GM12878 (cell line): ENCODE measurements at regions of chr12 and their contacts with region 1.

Region 1: GRCh38 chr12:49707128-49707811 is at the start of gene FMNL3:
- DNase-seq: peak; percentile 82
- ATAC-seq: peak; percentile 82
- H3K4me3 ChIP-seq: peak within 1 kb of the TSS; percentile 96
- H3K27ac ChIP-seq: peak within 1 kb of the TSS; percentile 82
- H3K4me1 ChIP-seq: peaks cover 19% of the 10 kb centered on the region
- H3K27me3 ChIP-seq: peaks cover 0 to 4% of the 10 kb centered on the region in 2 experiments; a peak in 1 of 4 replicates
- CTCF ChIP-seq: peak; percentile 94 to 99 (median 95); a peak in 5 of 6 replicates
- EP300 ChIP-seq: peak in 1 of 2 experiments; percentile 29; a peak in 1 of 4 replicates
- POLR2A ChIP-seq: peak; percentile 77
- RAD21 ChIP-seq: peak; percentile 95
- polyA plus RNA-seq, gene FMNL3: 3.0 to 5.3 TPM

Region 2: DNA sequence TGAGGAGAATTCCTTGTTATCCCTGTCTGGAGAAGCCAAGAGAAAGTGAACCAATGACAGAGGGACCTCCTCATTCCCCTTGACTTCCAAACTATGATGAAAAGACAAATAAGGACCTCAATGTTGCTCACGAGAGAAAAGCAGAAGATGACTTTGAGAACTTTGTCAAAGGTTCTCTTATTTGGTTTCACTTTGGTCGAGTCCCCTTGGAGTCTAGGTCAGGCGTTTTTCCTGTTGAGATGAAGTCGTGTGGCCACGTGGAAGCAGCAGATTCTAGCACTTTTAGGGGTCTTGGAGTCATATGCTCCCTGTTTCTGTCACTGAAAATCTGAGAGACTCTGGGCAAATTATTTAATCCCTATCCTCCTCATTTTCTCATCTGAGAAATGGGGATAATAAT is 1669.2 kb before region 1 on chr12:
- CTCF ChIA-PET with region 1: no interaction called
- POLR2A ChIA-PET with region 1: no interaction called
- RAD21 ChIA-PET with region 1: no interaction called
- SMC1A ChIA-PET with region 1: no interaction called
- in situ Hi-C with region 1: no loop called
- intact Hi-C with region 1: no loop called
- DNase-seq: no peak
- ATAC-seq: no peak
- H3K4me3 ChIP-seq: no peak overlapping the region
- H3K27ac ChIP-seq: no peak overlapping the region
- H3K4me1 ChIP-seq: no peaks in the 10 kb centered on the region; the same call in 1 of the 2 replicates
- H3K27me3 ChIP-seq: no peaks in the 10 kb centered on the region
- CTCF ChIP-seq: no peak
- EP300 ChIP-seq: no peak
- POLR2A ChIP-seq: no peak
- RAD21 ChIP-seq: no peak

Region 3: GRCh38 chr12:49366652-49367380 is 340.5 kb before region 1 on chr12:
- CTCF ChIA-PET with region 1: no interaction called
- POLR2A ChIA-PET with region 1: interaction called, 8 read pairs
- RAD21 ChIA-PET with region 1: interaction called, 15 read pairs
- SMC1A ChIA-PET with region 1: no interaction called
- in situ Hi-C with region 1: no loop called
- intact Hi-C with region 1: loop called (anchors 5 kb)
- DNase-seq: peak; percentile 73
- ATAC-seq: peak; percentile 84
- H3K4me3 ChIP-seq: peak overlapping the region; percentile 89
- H3K27ac ChIP-seq: peak overlapping the region; percentile 97
- H3K4me1 ChIP-seq: peaks cover 16% of the 10 kb centered on the region
- H3K27me3 ChIP-seq: no peaks in the 10 kb centered on the region
- CTCF ChIP-seq: peak in 2 of 3 experiments; percentile 8 to 10; a peak in 1 of 6 replicates
- EP300 ChIP-seq: no peak
- POLR2A ChIP-seq: peak; percentile 87
- RAD21 ChIP-seq: no peak

Region 4: DNA sequence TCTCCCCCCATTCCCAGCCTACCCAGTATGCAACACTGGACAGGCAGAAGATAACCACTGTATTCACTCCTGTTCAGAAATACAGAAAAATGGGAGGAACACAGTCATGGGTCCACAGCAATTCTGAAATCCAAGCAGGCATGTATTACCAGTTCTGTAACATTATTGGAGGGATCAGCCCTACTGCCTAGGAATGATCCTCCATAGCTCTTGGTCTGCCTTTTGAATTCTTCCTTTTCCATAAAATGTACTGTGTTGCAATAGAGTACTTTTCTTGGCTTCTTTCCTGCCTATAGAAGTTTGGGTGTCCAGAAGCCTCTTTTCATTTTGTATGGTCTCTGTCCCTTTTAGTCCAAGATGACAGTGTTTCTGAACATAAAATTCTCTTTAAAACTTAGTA is 293.5 kb before region 1 on chr12:
- CTCF ChIA-PET with region 1: no interaction called
- POLR2A ChIA-PET with region 1: no interaction called
- RAD21 ChIA-PET with region 1: no interaction called
- SMC1A ChIA-PET with region 1: no interaction called
- in situ Hi-C with region 1: no loop called
- intact Hi-C with region 1: no loop called
- DNase-seq: no peak
- ATAC-seq: no peak
- H3K4me3 ChIP-seq: no peak overlapping the region
- H3K27ac ChIP-seq: no peak overlapping the region
- H3K4me1 ChIP-seq: peaks cover 4% of the 10 kb centered on the region
- H3K27me3 ChIP-seq: no peaks in the 10 kb centered on the region
- CTCF ChIP-seq: no peak
- EP300 ChIP-seq: no peak
- POLR2A ChIP-seq: no peak
- RAD21 ChIP-seq: no peak

Region 5: GRCh38 chr12:49623142-49623904 is 83.9 kb before region 1 on chr12 and contains the start of gene PRPF40B:
- CTCF ChIA-PET with region 1: interaction called, 9 read pairs
- POLR2A ChIA-PET with region 1: interaction called, 35 read pairs
- RAD21 ChIA-PET with region 1: interaction called, 9 read pairs
- SMC1A ChIA-PET with region 1: interaction called, 7 read pairs
- in situ Hi-C with region 1: no loop called
- intact Hi-C with region 1: no loop called
- DNase-seq: peak; percentile 36
- ATAC-seq: peak; percentile 87
- H3K4me3 ChIP-seq: peak within 1 kb of the TSS; percentile 85
- H3K27ac ChIP-seq: peak within 1 kb of the TSS; percentile 75
- H3K4me1 ChIP-seq: peaks cover 17% of the 10 kb centered on the region
- H3K27me3 ChIP-seq: no peaks in the 10 kb centered on the region
- CTCF ChIP-seq: peak; percentile 33 to 66 (median 57)
- EP300 ChIP-seq: no peak
- POLR2A ChIP-seq: peak; percentile 90
- RAD21 ChIP-seq: peak; percentile 40; the same call in 1 of the 2 replicates
- polyA plus RNA-seq, gene PRPF40B: 0.31 to 1.2 TPM

Region 6: DNA sequence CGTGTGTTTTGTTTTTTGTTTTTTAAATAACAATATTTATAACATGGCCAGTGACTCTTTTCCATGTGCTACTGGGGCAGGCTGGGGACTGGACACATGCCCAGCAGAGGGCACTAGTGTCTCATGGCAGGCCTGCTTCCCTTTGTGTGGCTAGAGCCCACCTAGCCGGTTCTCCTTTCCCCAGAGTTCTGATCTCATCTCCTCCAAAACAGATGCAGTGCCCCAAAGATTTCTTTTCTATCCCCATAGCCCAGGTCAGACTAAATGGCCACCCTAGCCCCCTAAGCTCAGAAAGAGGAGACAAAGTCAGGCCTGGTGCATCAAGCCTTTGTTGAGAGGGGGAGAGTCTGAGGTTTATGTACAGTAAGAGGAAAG is 62.7 kb before region 1 on chr12:
- CTCF ChIA-PET with region 1: interaction called, 486 read pairs
- POLR2A ChIA-PET with region 1: interaction called, 28 read pairs
- RAD21 ChIA-PET with region 1: interaction called, 107 read pairs
- SMC1A ChIA-PET with region 1: interaction called, 191 read pairs
- in situ Hi-C with region 1: loop called (anchors 5 kb)
- intact Hi-C with region 1: loop called (anchors 1 kb)
- DNase-seq: peak; percentile 27
- ATAC-seq: peak; percentile 96
- H3K4me3 ChIP-seq: no peak overlapping the region
- H3K27ac ChIP-seq: peak overlapping the region; percentile 28; the same call in 1 of the 2 replicates
- H3K4me1 ChIP-seq: no peaks in the 10 kb centered on the region
- H3K27me3 ChIP-seq: no peaks in the 10 kb centered on the region
- CTCF ChIP-seq: peak; percentile 90 to 95 (median 91)
- EP300 ChIP-seq: no peak
- POLR2A ChIP-seq: no peak
- RAD21 ChIP-seq: peak; percentile 96

Region 7: GRCh38 chr12:49662998-49663843 is 44.0 kb before region 1 on chr12:
- CTCF ChIA-PET with region 1: interaction called, 87 read pairs
- POLR2A ChIA-PET with region 1: interaction called, 166 read pairs
- RAD21 ChIA-PET with region 1: interaction called, 154 read pairs
- SMC1A ChIA-PET with region 1: interaction called, 162 read pairs
- in situ Hi-C with region 1: no loop called
- intact Hi-C with region 1: loop called (anchors 2 kb)
- DNase-seq: peak; percentile 75
- ATAC-seq: peak; percentile 91
- H3K4me3 ChIP-seq: peak overlapping the region; percentile 39; the same call in 1 of the 2 replicates
- H3K27ac ChIP-seq: peak overlapping the region; percentile 86
- H3K4me1 ChIP-seq: peaks cover 58% of the 10 kb centered on the region
- H3K27me3 ChIP-seq: no peaks in the 10 kb centered on the region
- CTCF ChIP-seq: no peak
- EP300 ChIP-seq: peak; percentile 11 to 36; a peak in 2 of 4 replicates
- POLR2A ChIP-seq: peak; percentile 88
- RAD21 ChIP-seq: peak; percentile 23; the same call in 1 of the 2 replicates

Region 8: GRCh38 chr12:49678711-49679110 is 28.6 kb before region 1 on chr12:
- CTCF ChIA-PET with region 1: interaction called, 86 read pairs
- POLR2A ChIA-PET with region 1: interaction called, 166 read pairs
- RAD21 ChIA-PET with region 1: interaction called, 167 read pairs
- SMC1A ChIA-PET with region 1: interaction called, 129 read pairs
- in situ Hi-C with region 1: no loop called
- intact Hi-C with region 1: no loop called
- DNase-seq: no peak
- ATAC-seq: no peak
- H3K4me3 ChIP-seq: no peak overlapping the region
- H3K27ac ChIP-seq: no peak overlapping the region
- H3K4me1 ChIP-seq: peaks cover 23% of the 10 kb centered on the region
- H3K27me3 ChIP-seq: no peaks in the 10 kb centered on the region
- CTCF ChIP-seq: no peak
- EP300 ChIP-seq: no peak
- POLR2A ChIP-seq: no peak
- RAD21 ChIP-seq: no peak

Region 9: GRCh38 chr12:49740930-49741881 is 33.9 kb after region 1 on chr12 and contains the start of gene TMBIM6:
- CTCF ChIA-PET with region 1: interaction called, 24 read pairs
- POLR2A ChIA-PET with region 1: interaction called, 34 read pairs
- RAD21 ChIA-PET with region 1: interaction called, 27 read pairs
- SMC1A ChIA-PET with region 1: interaction called, 20 read pairs
- in situ Hi-C with region 1: no loop called
- intact Hi-C with region 1: loop called (anchors 2 kb)
- DNase-seq: peak; percentile 99
- ATAC-seq: peak; percentile 96
- H3K4me3 ChIP-seq: peak within 1 kb of the TSS; percentile 77
- H3K27ac ChIP-seq: peak within 1 kb of the TSS; percentile 96
- H3K4me1 ChIP-seq: 0 out of 2 replicates have a peak, but pooled peaks cover 2% of the 10 kb centered on the region
- H3K27me3 ChIP-seq: no peaks in the 10 kb centered on the region
- CTCF ChIP-seq: peak; percentile 91 to 99 (median 98)
- EP300 ChIP-seq: no peak
- POLR2A ChIP-seq: peak; percentile 98
- RAD21 ChIP-seq: peak; percentile 80
- polyA plus RNA-seq, gene TMBIM6: 853 to 1,192 TPM

Region 10: DNA sequence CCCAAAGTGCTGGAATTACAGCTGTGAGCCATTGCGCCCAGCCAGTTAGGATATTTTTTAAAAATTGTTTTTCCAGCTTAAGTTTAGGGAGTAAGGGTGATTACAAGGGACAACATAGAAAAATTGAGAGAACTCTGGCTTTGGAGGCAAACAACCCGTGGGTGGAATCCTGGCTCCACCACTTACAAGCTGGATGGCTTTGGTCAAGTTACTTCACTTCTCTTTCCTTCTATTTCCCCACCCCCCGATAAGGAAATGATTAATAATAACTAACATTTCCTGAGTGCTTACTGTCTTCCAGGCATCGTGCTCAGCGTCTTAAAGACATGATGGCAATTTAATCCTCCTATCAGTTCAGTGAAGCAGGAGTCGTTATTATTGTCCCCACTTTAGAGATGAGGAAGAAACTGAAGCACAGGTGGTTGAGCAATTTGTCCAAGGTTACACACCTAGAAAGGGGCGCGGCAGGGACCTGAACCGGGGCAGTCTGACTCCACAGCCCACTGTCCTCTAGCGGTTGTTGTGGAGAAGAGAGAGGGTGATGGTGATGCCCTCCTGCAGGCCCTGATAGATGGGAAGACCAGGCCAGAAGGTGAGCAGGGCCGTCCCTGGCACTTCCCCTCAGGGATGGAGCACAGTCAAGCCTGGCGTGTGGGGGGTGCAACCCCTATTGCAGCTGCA is 213.1 kb after region 1 on chr12:
- CTCF ChIA-PET with region 1: no interaction called
- POLR2A ChIA-PET with region 1: no interaction called
- RAD21 ChIA-PET with region 1: no interaction called
- SMC1A ChIA-PET with region 1: no interaction called
- in situ Hi-C with region 1: no loop called
- intact Hi-C with region 1: no loop called
- DNase-seq: no peak
- ATAC-seq: no peak
- H3K4me3 ChIP-seq: no peak overlapping the region
- H3K27ac ChIP-seq: no peak overlapping the region
- H3K4me1 ChIP-seq: no peaks in the 10 kb centered on the region
- H3K27me3 ChIP-seq: peaks cover 1 to 2% of the 10 kb centered on the region in 2 experiments; a peak in 2 of 4 replicates
- CTCF ChIP-seq: no peak
- EP300 ChIP-seq: no peak
- POLR2A ChIP-seq: no peak
- RAD21 ChIP-seq: no peak

Region 11: GRCh38 chr12:49945394-49946080 is 238.3 kb after region 1 on chr12:
- CTCF ChIA-PET with region 1: no interaction called
- POLR2A ChIA-PET with region 1: no interaction called
- RAD21 ChIA-PET with region 1: no interaction called
- SMC1A ChIA-PET with region 1: no interaction called
- in situ Hi-C with region 1: no loop called
- intact Hi-C with region 1: no loop called
- DNase-seq: peak; percentile 45
- ATAC-seq: peak; percentile 100
- H3K4me3 ChIP-seq: no peak overlapping the region
- H3K27ac ChIP-seq: no peak overlapping the region
- H3K4me1 ChIP-seq: no peaks in the 10 kb centered on the region
- H3K27me3 ChIP-seq: no peaks in the 10 kb centered on the region; a peak in 1 of 4 replicates
- CTCF ChIP-seq: peak; percentile 85 to 93 (median 92)
- EP300 ChIP-seq: no peak
- POLR2A ChIP-seq: no peak
- RAD21 ChIP-seq: no peak